ENCODE measurements at regions of chr18 and their contacts with region 1.

Region 1: DNA sequence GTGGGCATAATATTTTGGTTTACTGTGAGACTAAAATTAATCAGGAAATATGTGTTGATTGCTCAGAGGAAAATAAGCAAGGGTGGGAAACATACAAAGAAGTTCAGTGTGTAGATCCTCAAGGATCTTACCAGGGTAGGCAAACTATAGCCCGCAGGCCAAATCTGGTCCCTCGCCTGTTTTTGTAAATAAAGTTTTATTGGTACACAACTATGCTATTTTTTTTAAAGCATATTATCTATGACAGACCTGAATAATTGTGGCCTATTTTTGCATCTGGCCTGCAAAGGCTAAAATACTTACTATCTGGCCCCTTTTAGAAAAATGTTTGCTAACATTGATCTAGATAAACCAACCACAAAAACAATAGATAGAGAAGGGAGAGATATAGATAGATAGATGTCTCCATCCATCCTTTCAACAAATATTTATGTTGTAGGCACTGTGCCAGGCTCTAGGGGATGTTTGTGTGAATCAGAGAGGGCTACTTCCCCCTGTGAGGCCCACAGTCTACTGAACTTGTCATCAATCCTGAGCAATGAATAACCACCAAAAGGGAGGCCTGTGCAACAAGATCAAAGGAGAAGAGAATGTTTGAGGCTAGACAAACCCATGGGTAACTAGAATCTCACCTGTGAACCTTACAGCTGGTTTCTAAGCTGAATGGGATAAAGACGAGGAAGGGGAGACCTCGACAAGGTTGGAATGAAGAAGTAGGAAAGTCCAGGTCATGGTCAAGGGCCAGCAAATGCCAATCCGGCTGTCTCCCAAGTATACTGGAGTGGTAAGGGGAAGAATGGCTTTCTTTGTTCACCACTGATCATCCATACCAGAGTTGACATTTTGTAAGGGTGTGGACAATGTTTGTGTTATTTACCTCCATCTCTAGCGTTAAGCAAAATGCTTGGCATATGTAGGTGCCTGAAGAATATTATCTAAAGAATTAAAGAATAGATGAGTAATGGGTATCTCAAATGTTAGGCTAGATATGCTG is 23.6 kb downstream of the ALPK2 start:
- DNase-seq: peak; percentile 72
- H3K4me3 Mint-ChIP-seq: no peak overlapping the region
- H3K27ac Mint-ChIP-seq: peak overlapping the region; percentile 39
- H3K4me1 Mint-ChIP-seq: peaks cover 61% of the 10 kb centered on the region
- H3K27me3 Mint-ChIP-seq: no peaks in the 10 kb centered on the region

Region 2: DNA sequence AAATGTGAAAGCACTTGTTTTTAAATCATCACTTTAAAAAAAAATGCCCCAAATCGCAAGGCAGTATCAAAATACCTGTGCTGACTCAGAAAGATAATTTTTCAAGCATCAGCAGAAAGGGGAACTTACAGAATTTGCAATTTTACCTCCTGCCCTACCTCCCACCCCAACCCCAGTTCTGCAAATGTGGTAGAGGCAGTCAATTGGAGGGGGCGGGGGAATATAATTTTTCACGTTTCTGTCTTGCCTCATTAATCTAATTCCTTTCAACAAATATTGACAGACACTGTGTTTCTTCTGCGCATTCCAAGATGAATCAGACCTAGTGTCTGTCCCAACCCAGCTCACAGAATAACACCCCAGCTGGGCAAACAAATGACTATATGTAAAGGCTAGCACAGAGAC is 53.3 kb before region 1 on chr18:
- CTCF ChIA-PET with region 1: no interaction called
- POLR2A ChIA-PET with region 1: no interaction called
- intact Hi-C with region 1: loop called (anchors 1 kb)
- DNase-seq: peak; percentile 56
- H3K4me3 Mint-ChIP-seq: no peak overlapping the region
- H3K27ac Mint-ChIP-seq: no peak overlapping the region
- H3K4me1 Mint-ChIP-seq: peaks cover 44% of the 10 kb centered on the region
- H3K27me3 Mint-ChIP-seq: no peaks in the 10 kb centered on the region

Region 3: DNA sequence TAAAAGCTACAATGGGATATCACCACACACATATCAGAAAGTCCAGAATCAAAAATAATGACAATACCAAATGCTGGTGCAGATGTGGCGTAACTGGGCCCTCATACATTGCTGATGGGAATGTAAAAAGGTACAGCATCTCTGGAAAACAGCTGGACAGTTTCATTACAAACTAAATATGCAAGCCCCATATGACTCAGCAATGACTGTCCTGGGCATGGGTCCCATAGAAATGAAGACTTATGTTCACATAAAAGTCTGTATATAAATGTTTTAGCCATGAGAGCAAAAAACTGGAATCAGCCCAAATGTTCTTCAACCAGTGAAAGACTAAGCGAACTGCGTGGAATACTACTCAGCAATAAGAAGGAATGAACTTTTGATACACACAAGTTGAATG is 33.1 kb before region 1 on chr18:
- CTCF ChIA-PET with region 1: no interaction called
- POLR2A ChIA-PET with region 1: no interaction called
- intact Hi-C with region 1: loop called (anchors 2 kb)
- DNase-seq: no peak
- H3K4me3 Mint-ChIP-seq: no peak overlapping the region
- H3K27ac Mint-ChIP-seq: no peak overlapping the region
- H3K4me1 Mint-ChIP-seq: peaks cover 15% of the 10 kb centered on the region
- H3K27me3 Mint-ChIP-seq: no peaks in the 10 kb centered on the region

Measured in activated CD4-positive, alpha-beta memory T cell treated with anti-CD3 and anti-CD28 coated beads for 36 hours (primary cell).